BJ (cell line): ENCODE measurements at regions of chr1 and their contacts with region 1.

Region 1: DNA sequence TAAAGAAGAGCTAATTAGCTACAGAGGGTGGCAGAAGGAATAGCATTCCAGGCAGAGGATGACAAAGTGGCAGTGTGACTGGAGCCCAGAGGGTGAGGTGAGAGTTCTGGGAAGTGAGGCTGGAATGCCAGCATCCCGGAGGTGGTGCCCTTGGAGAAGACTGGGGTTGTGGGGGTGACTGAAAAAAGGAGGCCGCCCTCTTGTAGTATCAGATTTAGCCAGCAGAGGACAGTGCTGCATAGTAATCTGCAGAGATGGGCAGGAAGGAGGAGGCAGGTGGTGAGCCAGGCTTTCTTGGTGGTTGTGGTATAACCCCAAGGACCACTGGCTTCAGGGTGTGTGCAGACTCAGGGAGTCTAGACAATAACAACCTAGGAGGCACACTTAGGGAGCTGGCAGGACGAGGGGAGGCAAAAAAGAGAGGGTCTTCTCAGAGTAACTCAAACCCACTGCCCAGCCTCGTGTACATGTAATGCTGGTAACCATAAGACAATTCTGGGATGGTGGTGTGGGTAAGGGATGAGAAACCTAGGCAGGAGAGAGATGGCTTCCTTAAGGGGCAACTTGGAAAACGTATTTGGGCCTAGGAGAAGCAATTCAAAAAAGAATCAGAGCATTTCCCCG is 30.5 kb downstream of the MROH7 start:
- DNase-seq: no peak
- H3K4me3 ChIP-seq: no peak overlapping the region
- H3K27me3 ChIP-seq: peaks cover 1% of the 10 kb centered on the region; the same call in 1 of the 2 replicates
- CTCF ChIP-seq: peak; percentile 90

Region 2: DNA sequence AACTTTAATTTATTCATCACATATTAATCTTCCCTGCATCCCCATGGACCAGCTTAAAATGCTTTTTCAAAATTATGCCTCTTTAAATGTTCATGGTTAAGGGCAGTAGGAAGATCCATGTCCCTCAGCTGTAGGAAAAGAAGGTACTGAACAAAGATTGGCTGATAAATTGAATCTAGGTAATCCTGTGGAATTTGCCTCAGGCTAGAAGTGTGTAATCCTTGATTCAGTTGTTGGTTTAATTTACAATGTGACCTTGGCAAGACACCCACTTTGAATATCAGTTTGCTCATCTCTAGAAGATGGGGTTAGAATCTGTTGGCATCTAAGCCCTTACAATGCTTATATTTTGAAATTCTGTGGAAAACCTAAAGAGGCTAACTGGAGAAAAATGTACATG is 49.6 kb after region 1 on chr1:
- CTCF ChIA-PET with region 1: no interaction called
- POLR2A ChIA-PET with region 1: no interaction called
- DNase-seq: no peak
- H3K4me3 ChIP-seq: no peak overlapping the region
- H3K27me3 ChIP-seq: no peaks in the 10 kb centered on the region
- CTCF ChIP-seq: no peak

Region 3: GRCh38 chr1:54742282-54742681 is 70.2 kb after region 1 on chr1:
- CTCF ChIA-PET with region 1: no interaction called
- POLR2A ChIA-PET with region 1: no interaction called
- DNase-seq: no peak
- H3K4me3 ChIP-seq: no peak overlapping the region
- H3K27me3 ChIP-seq: no peaks in the 10 kb centered on the region
- CTCF ChIP-seq: no peak

Region 4: GRCh38 chr1:54810100-54810942 is 138.2 kb after region 1 on chr1:
- CTCF ChIA-PET with region 1: interaction called, 11 read pairs
- POLR2A ChIA-PET with region 1: no interaction called
- DNase-seq: no peak
- H3K4me3 ChIP-seq: no peak overlapping the region
- H3K27me3 ChIP-seq: peaks cover 9% of the 10 kb centered on the region
- CTCF ChIP-seq: peak; percentile 91